Naive thymus-derived CD4-positive, alpha-beta T cell (primary cell): ENCODE measurements at regions of chr21 and their contacts with region 1.

Region 1: DNA sequence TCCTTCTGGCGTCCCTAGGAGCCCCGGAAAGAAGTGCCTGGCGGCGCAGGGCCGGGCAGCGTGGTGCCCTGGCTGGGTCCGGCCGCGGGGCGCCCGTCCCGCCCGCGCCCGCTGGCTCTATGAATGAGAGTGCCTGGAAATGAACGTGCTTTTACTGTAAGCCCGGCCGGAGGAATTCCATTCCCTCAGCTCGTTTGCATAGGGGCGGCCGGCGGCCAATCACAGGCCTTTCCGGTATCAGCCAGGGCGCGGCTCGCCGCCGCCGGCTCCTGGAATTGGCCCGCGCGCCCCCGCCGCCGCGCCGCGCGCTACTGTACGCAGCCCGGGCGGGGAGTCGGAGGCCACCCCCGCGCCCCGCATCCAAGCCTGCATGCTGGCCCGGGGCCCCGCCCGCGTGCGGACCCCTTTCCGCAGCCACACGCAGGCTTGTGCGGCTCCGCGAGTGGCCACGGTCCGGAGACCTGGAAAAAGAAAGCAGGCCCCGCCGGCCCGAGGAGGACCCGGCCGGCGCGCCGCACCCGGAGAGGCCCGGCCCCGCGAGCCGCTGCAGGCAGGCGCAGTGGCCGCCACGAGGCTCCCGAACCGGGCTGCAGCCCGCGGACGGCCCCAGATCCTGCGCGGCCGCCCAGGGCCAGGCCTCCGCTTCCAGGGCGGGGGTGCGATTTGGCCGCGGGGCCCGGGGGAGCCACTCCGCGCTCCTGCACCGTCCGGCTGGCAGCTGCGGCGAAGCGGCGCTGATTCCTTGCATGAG is 160.4 kb downstream of the RUNX1 start:
- DNase-seq: peak; percentile 59 to 90 (median 62)
- ATAC-seq: peak; percentile 61
- H3K4me3 ChIP-seq: peak overlapping the region; percentile 72
- H3K4me3 Mint-ChIP-seq: peak overlapping the region; percentile 89 to 100 (median 96)
- H3K27ac ChIP-seq: peak overlapping the region; percentile 86
- H3K27ac Mint-ChIP-seq: peak overlapping the region; percentile 95 to 100 (median 99)
- H3K4me1 ChIP-seq: peaks cover 22 to 25% of the 10 kb centered on the region in 2 donors
- H3K4me1 Mint-ChIP-seq: peaks cover 15 to 70% (median 61%) of the 10 kb centered on the region in 7 donors
- H3K27me3 ChIP-seq: no peaks in the 10 kb centered on the region
- H3K27me3 Mint-ChIP-seq: peaks cover 0 to 16% (median 0%) of the 10 kb centered on the region in 5 donors

Region 2: GRCh38 chr21:34745557-34746255 is 143.0 kb before region 1 on chr21:
- CTCF ChIA-PET with region 1: interaction called, 4 read pairs
- POLR2A ChIA-PET with region 1: no interaction called
- intact Hi-C with region 1: loop called (anchors 1 to 2 kb)
- DNase-seq: peak; percentile 27 to 65 (median 49)
- ATAC-seq: peak; percentile 92
- H3K4me3 ChIP-seq: no peak overlapping the region
- H3K4me3 Mint-ChIP-seq: peak overlapping the region; percentile 25 to 75 (median 60)
- H3K27ac ChIP-seq: no peak overlapping the region
- H3K27ac Mint-ChIP-seq: no peak overlapping the region
- H3K4me1 ChIP-seq: no peaks in the 10 kb centered on the region
- H3K4me1 Mint-ChIP-seq: peaks cover 0 to 5% (median 4%) of the 10 kb centered on the region in 7 donors
- H3K27me3 ChIP-seq: no peaks in the 10 kb centered on the region
- H3K27me3 Mint-ChIP-seq: peaks cover 0 to 19% (median 4%) of the 10 kb centered on the region in 5 donors

Region 3: GRCh38 chr21:34933609-34934335 is 45.0 kb after region 1 on chr21:
- CTCF ChIA-PET with region 1: interaction called, 5 read pairs
- POLR2A ChIA-PET with region 1: interaction called, 12 read pairs
- intact Hi-C with region 1: loop called (anchors 1 to 2 kb)
- DNase-seq: peak in 7 of 9 donors; percentile 47 to 83 (median 72)
- ATAC-seq: peak; percentile 94
- H3K4me3 ChIP-seq: peak overlapping the region; percentile 56
- H3K4me3 Mint-ChIP-seq: peak overlapping the region; percentile 39 to 88 (median 78)
- H3K27ac ChIP-seq: peak overlapping the region; percentile 81
- H3K27ac Mint-ChIP-seq: peak overlapping the region; percentile 83 to 97 (median 94)
- H3K4me1 ChIP-seq: peaks cover 52 to 68% of the 10 kb centered on the region in 2 donors
- H3K4me1 Mint-ChIP-seq: peaks cover 70 to 93% (median 89%) of the 10 kb centered on the region in 7 donors
- H3K27me3 ChIP-seq: no peaks in the 10 kb centered on the region
- H3K27me3 Mint-ChIP-seq: no peaks in the 10 kb centered on the region

Region 4: GRCh38 chr21:35051287-35051818 is 162.6 kb after region 1 on chr21:
- CTCF ChIA-PET with region 1: interaction called, 71 read pairs
- POLR2A ChIA-PET with region 1: interaction called, 51 read pairs
- intact Hi-C with region 1: loop called (anchors 1 kb)
- DNase-seq: peak; percentile 61 to 85 (median 80)
- ATAC-seq: peak; percentile 74
- H3K4me3 ChIP-seq: no peak overlapping the region
- H3K4me3 Mint-ChIP-seq: peak overlapping the region; percentile 70 to 99 (median 94)
- H3K27ac ChIP-seq: peak overlapping the region; percentile 38
- H3K27ac Mint-ChIP-seq: peak overlapping the region; percentile 80 to 100 (median 98)
- H3K4me1 ChIP-seq: peaks cover 29 to 42% of the 10 kb centered on the region in 2 donors
- H3K4me1 Mint-ChIP-seq: peaks cover 37 to 61% (median 47%) of the 10 kb centered on the region in 7 donors
- H3K27me3 ChIP-seq: no peaks in the 10 kb centered on the region
- H3K27me3 Mint-ChIP-seq: peaks cover 0 to 5% (median 0%) of the 10 kb centered on the region in 5 donors

Region 5: GRCh38 chr21:35400233-35400957 is 511.7 kb after region 1 on chr21:
- CTCF ChIA-PET with region 1: interaction called, 19 read pairs
- POLR2A ChIA-PET with region 1: interaction called, 7 read pairs
- intact Hi-C with region 1: loop called (anchors 1 kb)
- DNase-seq: peak in 8 of 9 donors; percentile 23 to 73 (median 63)
- ATAC-seq: peak; percentile 88
- H3K4me3 ChIP-seq: no peak overlapping the region
- H3K4me3 Mint-ChIP-seq: peak overlapping the region in 3 of 10 donors; percentile 0 to 9 (median 1)
- H3K27ac ChIP-seq: no peak overlapping the region
- H3K27ac Mint-ChIP-seq: peak overlapping the region in 1 of 9 donors; percentile 65
- H3K4me1 ChIP-seq: no peaks in the 10 kb centered on the region
- H3K4me1 Mint-ChIP-seq: peaks cover 7 to 21% (median 15%) of the 10 kb centered on the region in 7 donors
- H3K27me3 ChIP-seq: no peaks in the 10 kb centered on the region
- H3K27me3 Mint-ChIP-seq: peaks cover 0 to 4% (median 0%) of the 10 kb centered on the region in 5 donors

Region 6: GRCh38 chr21:35840197-35840799 is 951.6 kb after region 1 on chr21:
- CTCF ChIA-PET with region 1: interaction called, 3 read pairs
- POLR2A ChIA-PET with region 1: no interaction called
- intact Hi-C with region 1: loop called (anchors 5 to 10 kb)
- DNase-seq: peak in 7 of 9 donors; percentile 30 to 69 (median 52)
- ATAC-seq: peak; percentile 69
- H3K4me3 ChIP-seq: no peak overlapping the region
- H3K4me3 Mint-ChIP-seq: no peak overlapping the region
- H3K27ac ChIP-seq: no peak overlapping the region
- H3K27ac Mint-ChIP-seq: no peak overlapping the region
- H3K4me1 ChIP-seq: peaks cover 0 to 4% of the 10 kb centered on the region in 2 donors
- H3K4me1 Mint-ChIP-seq: peaks cover 0 to 18% (median 5%) of the 10 kb centered on the region in 7 donors
- H3K27me3 ChIP-seq: no peaks in the 10 kb centered on the region
- H3K27me3 Mint-ChIP-seq: peaks cover 0 to 6% (median 0%) of the 10 kb centered on the region in 5 donors